OCI-LY7 (cell line): ENCODE measurements at regions of chr10 and their contacts with region 1.

Region 1: DNA sequence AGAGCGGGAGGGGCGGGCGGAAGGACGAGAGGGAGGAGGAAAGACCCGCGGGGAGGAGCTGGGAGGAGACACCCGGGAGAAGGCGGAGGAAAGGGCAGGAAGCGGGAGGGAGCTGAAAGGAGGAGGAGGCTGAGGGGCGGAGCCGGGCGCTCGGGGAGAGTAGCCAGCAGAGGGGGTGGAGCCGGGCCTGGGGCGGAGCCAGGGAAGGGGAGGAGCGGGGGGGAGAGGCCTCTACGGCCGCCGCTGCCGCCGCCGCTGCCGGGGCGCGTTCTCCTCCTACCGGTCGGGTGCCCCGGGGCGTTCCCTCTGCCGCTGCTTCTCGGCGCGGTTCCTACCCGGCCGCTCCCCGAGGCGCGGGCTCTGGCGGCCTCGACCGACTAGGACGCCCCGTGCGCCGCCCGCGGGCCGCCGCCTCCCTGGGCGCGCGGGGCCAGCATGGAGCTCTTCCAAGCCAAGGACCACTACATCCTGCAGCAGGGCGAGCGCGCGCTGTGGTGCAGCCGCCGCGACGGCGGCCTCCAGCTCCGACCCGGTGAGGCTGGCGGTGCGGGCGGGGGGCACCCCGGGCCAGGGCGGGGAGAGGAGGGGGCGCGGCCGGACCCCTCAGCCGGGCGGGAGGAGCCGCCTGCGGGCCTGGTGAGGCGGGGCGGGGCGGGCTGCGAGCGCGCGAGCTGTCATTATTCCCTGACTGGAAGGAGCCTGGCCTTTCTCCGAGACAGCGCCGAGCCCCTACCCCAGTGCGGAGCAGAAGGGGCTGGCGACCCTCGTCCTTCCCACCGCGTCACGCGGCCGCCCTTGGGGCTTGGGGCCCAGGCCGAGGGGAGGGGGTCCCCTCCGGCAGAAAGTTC is at the start of gene INPP5F:
- DNase-seq: peak; percentile 95
- H3K4me3 ChIP-seq: peak within 1 kb of the TSS; percentile 92
- H3K27ac ChIP-seq: peak within 1 kb of the TSS; percentile 74
- H3K4me1 ChIP-seq: peaks cover 39% of the 10 kb centered on the region
- CTCF ChIP-seq: no peak; the same call in 1 of the 2 replicates
- total RNA-seq, gene INPP5F: 6.2 TPM in 2 replicates

Region 2: GRCh38 chr10:119596537-119597404 is 129.3 kb before region 1 on chr10 and contains the start of gene TIAL1:
- CTCF ChIA-PET with region 1: interaction called, 5 read pairs
- POLR2A ChIA-PET with region 1: interaction called, 5 read pairs
- intact Hi-C with region 1: loop called (anchors 5 kb)
- DNase-seq: peak; percentile 98
- H3K4me3 ChIP-seq: peak within 1 kb of the TSS; percentile 91
- H3K27ac ChIP-seq: peak within 1 kb of the TSS; percentile 84
- H3K4me1 ChIP-seq: peaks cover 44% of the 10 kb centered on the region
- CTCF ChIP-seq: no peak
- total RNA-seq, gene TIAL1: 61.1 and 67.6 TPM in 2 replicates

Region 3: DNA sequence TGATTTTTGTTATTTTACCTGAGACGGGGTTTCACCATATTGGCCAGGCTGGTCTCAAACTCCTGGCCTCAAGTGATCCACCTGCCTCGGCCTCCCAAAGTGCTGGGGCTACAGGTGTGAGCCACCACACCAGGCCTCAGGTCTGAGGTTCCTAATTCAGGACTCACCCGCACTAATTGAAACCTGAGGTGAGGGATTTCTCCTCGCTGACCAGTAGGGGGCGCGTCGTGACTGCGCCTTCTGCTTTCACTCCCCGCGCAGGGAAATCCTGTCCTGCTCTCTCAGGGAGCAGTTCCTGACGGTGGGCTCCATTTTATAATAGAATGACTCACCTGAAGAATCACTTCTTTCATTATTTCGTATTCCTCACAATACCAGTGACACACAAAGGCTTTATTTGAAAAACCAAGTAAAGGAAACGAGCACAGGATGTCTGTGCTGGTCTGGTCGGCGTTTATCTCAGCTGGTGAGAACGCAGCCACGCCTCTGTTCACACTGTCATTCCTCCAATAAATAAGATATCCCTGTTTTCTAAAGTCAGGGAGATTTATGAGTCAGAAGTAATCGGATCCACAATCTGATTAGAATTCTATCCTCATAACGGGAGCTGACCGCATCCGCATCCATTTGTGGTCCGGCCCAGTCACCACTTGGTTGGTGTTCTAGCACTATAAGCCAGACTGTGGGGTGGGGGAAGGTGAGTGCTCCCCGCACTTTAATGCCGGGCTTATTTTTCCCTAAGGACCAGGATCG is 39.4 kb before region 1 on chr10:
- CTCF ChIA-PET with region 1: interaction called, 4 read pairs
- POLR2A ChIA-PET with region 1: interaction called, 3 read pairs
- intact Hi-C with region 1: loop called (anchors 1 kb)
- DNase-seq: peak; percentile 80
- H3K4me3 ChIP-seq: no peak overlapping the region
- H3K27ac ChIP-seq: no peak overlapping the region
- H3K4me1 ChIP-seq: no peaks in the 10 kb centered on the region
- CTCF ChIP-seq: peak; percentile 95

Region 4: GRCh38 chr10:119693262-119693957 is 32.6 kb before region 1 on chr10:
- CTCF ChIA-PET with region 1: interaction called, 4 read pairs
- POLR2A ChIA-PET with region 1: interaction called, 18 read pairs
- intact Hi-C with region 1: no loop called
- DNase-seq: no peak
- H3K4me3 ChIP-seq: no peak overlapping the region
- H3K27ac ChIP-seq: no peak overlapping the region
- H3K4me1 ChIP-seq: no peaks in the 10 kb centered on the region
- CTCF ChIP-seq: no peak

Region 5: DNA sequence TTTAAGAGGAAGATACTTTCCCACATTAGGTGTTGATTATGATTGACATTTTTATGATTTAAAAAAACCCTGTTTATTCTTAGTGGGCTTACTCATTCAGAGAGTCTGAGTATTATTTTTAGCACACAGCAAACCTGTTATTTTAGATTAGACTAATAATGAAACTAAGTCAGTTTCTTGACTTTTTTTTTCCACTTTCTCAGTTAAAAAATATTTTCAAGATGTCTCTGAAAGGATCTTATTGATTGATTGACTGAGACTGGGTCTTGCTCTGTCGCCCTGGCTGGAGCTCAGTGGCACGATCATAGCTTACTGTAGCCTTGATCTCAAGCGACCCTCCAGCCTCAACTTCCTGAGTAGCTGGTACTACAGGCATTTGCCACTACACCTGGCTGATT is 20.6 kb before region 1 on chr10:
- CTCF ChIA-PET with region 1: interaction called, 5 read pairs
- POLR2A ChIA-PET with region 1: interaction called, 79 read pairs
- intact Hi-C with region 1: loop called (anchors 2 kb)
- DNase-seq: peak; percentile 8
- H3K4me3 ChIP-seq: no peak overlapping the region
- H3K27ac ChIP-seq: no peak overlapping the region
- H3K4me1 ChIP-seq: peaks cover 48% of the 10 kb centered on the region
- CTCF ChIP-seq: no peak

Region 6: GRCh38 chr10:119742947-119743648 is 17.0 kb after region 1 on chr10:
- CTCF ChIA-PET with region 1: interaction called, 5 read pairs
- POLR2A ChIA-PET with region 1: interaction called, 12 read pairs
- intact Hi-C with region 1: no loop called
- DNase-seq: no peak
- H3K4me3 ChIP-seq: no peak overlapping the region
- H3K27ac ChIP-seq: no peak overlapping the region
- H3K4me1 ChIP-seq: no peaks in the 10 kb centered on the region
- CTCF ChIP-seq: no peak

Region 7: DNA sequence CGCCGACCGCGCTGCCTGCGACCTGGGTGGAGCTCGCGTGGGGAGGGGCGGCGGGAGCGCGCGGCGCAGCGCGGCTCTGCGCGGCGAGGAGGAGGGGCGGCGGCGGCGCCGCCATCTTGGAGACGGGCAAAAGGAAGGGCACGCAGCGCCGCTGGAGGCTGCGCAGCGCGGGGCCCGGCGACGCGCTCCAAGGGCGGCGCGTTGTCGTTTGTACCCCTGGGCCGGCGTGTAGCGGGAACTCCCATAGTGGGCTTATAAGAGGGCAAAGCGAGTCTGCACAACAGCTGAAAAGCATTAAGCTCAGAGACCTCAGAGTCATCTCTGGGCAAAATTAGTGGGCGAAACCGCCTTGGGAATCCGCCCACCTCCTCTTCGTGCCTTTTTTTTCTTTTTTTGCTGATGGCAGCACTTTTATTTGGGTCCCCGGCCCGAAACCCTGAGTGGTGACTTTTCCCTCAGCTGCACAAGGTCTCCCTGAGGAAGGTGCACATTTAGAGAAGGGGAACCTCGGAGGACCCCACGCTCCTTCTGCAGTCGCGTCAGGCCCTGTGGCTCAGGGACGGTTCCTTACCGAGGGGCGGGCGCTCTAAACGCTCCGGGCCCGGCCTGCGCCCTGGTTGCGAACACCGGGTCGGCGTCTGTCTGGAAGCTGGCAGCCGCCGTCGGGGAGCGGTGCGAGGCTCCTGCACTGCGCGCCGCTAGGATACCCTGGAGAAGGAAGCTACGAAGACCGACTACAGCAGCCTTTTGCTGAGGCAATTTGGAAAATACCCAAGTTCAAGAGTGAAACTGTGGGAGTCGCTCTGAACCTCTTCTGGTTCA is 147.0 kb after region 1 on chr10:
- CTCF ChIA-PET with region 1: no interaction called
- POLR2A ChIA-PET with region 1: interaction called, 4 read pairs
- intact Hi-C with region 1: loop called (anchors 1 kb)
- DNase-seq: peak; percentile 91
- H3K4me3 ChIP-seq: peak overlapping the region; percentile 87
- H3K27ac ChIP-seq: peak overlapping the region; percentile 61
- H3K4me1 ChIP-seq: peaks cover 25% of the 10 kb centered on the region
- CTCF ChIP-seq: no peak